ENCODE measurements at regions of chr16 and their contacts with region 1.

Region 1: DNA sequence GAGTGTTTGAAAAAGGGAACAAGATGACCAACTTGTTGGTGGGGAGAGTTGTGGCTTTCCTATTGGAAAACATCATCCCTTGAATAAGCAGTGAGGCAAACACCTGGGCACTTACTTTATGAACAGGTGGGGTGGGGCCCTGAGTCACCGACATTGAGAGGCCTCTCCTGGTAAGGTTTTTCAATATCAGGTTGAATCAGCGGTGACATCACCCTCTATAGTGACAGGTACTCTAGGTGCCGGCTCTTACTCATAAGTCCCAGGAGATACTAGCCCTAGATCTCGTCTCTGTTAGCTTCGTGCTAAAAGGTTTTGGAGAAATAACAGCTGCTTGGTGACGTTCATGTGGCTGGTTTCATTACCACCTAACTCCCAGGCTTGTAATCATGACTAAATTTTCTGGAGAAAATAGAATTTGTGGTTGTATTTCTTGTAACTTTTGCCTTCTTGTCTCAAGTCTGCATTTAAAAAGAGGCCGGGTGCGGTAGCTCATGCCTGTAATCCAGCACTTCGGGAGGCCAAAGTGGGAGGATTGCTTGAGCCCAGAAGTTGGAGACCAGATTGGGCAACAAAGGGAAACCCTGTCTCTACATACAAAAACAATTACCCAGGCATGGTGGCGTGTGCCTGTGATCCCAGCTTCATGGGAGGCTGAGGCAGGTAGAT is 19.3 kb downstream of the CDH1 start:
- DNase-seq: peak; percentile 90
- ATAC-seq: peak; percentile 69
- H3K4me3 Mint-ChIP-seq: peak overlapping the region; percentile 52
- H3K27ac Mint-ChIP-seq: peak overlapping the region; percentile 97
- H3K4me1 Mint-ChIP-seq: peaks cover 66% of the 10 kb centered on the region
- H3K27me3 Mint-ChIP-seq: no peaks in the 10 kb centered on the region

Region 2: GRCh38 chr16:67311607-67312488 is 1444.5 kb before region 1 on chr16:
- CTCF ChIA-PET with region 1: no interaction called
- POLR2A ChIA-PET with region 1: no interaction called
- intact Hi-C with region 1: loop called in 1 of 2 experiments (anchors 5 kb)
- DNase-seq: peak; percentile 94
- ATAC-seq: peak; percentile 98
- H3K4me3 Mint-ChIP-seq: peak overlapping the region; percentile 1
- H3K27ac Mint-ChIP-seq: peak overlapping the region; percentile 98
- H3K4me1 Mint-ChIP-seq: peaks cover 40% of the 10 kb centered on the region
- H3K27me3 Mint-ChIP-seq: peaks cover 1% of the 10 kb centered on the region

Region 3: DNA sequence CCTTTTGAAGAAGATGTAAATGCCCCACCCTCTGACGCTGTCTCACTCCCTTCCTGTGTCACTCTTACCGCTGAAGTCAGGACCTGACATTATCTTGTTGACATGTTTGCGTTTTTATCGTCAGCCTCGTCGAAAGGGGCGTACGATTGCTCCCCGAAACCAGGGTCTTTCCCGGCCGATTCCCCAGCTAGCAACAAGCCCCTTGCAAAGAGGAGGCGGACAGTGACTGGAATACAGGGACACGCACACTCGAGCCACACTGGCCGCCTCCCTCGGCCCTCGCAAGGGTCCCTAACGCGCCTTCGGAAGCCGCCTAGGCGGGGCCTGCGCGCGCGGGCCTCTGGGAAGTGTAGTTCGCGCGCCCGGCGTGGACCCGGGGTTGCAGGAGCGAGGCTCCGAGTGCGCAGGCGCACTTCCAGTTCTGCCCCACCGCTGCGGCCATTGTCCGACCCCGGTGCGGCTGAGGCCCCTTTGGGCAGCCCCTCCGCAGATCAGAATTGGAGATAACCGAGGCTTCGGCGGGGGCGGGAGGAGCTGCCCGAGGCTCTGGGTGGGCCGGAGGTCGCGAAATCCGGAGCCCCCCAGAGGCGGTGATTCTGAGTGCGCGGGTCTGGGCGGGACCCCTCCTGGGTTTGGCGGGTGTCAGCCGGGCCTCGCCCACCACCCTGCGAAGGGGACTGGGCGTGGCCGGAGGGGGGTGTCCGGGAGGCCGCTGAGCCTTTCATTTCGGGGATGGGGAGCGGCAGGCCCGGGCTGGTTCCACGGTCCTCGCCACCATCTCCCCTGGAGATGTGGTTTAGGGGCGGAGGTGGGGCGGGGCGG is 217.3 kb before region 1 on chr16 and contains the start of gene ZFP90:
- CTCF ChIA-PET with region 1: no interaction called
- POLR2A ChIA-PET with region 1: interaction called, 4 read pairs
- intact Hi-C with region 1: loop called in 1 of 2 experiments (anchors 2 kb)
- DNase-seq: peak; percentile 93
- ATAC-seq: peak; percentile 96
- H3K4me3 Mint-ChIP-seq: peak within 1 kb of the TSS; percentile 89
- H3K27ac Mint-ChIP-seq: peak within 1 kb of the TSS; percentile 98
- H3K4me1 Mint-ChIP-seq: peaks cover 16% of the 10 kb centered on the region
- H3K27me3 Mint-ChIP-seq: no peaks in the 10 kb centered on the region
- total RNA-seq, gene ZFP90: 31.4 to 31.6 TPM

Region 4: DNA sequence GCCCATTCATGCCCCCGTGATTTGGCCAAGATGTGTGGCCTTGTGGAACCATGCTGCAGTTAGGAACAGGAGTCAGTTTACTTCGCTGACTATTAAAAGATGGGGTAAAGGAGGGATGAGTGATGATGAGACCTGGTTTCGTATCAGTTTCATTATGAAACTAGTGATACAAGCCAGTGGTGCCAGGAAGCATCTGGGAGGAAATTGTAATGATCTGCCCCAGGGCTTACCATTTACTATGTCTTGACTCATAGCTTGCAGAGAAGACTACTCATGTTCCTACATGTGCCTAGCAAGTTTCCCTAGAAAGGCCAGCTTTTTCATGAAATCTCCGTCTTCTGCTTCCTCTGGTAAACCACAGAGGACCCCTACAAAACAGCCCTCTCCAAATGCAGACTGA is 88.1 kb before region 1 on chr16:
- CTCF ChIA-PET with region 1: interaction called, 12 read pairs
- POLR2A ChIA-PET with region 1: interaction called, 15 read pairs
- intact Hi-C with region 1: loop called (anchors 1 kb)
- DNase-seq: peak; percentile 69
- ATAC-seq: peak; percentile 98
- H3K4me3 Mint-ChIP-seq: no peak overlapping the region
- H3K27ac Mint-ChIP-seq: peak overlapping the region; percentile 76
- H3K4me1 Mint-ChIP-seq: peaks cover 22% of the 10 kb centered on the region
- H3K27me3 Mint-ChIP-seq: peaks cover 5% of the 10 kb centered on the region

Region 5: GRCh38 chr16:68782198-68782597 is 25.8 kb after region 1 on chr16:
- CTCF ChIA-PET with region 1: interaction called, 3 read pairs
- POLR2A ChIA-PET with region 1: interaction called, 3 read pairs
- intact Hi-C with region 1: loop called in 1 of 2 experiments (anchors 2 kb)
- DNase-seq: peak; percentile 24
- ATAC-seq: peak; percentile 55
- H3K4me3 Mint-ChIP-seq: no peak overlapping the region
- H3K27ac Mint-ChIP-seq: no peak overlapping the region
- H3K4me1 Mint-ChIP-seq: peaks cover 7% of the 10 kb centered on the region
- H3K27me3 Mint-ChIP-seq: peaks cover 4% of the 10 kb centered on the region

Region 6: DNA sequence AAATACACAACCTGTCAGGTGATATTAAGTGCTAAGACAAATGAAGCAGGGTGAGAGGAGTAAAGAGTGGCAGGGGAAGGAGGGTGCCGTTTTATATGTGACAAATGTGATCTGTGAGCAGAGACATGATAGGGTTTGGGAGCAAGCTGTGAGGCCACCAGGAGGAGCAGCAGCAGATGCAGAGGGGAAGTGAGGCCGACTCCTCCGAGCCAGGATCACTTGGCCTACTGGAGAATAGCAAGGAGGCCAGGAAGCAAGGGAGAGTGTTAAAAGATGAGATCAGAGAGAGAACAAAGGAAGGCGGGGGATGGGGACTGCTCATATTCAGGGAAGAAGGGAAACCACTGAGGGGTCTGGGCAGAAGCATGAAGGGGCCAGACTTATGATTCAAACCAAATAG is 216.3 kb after region 1 on chr16:
- CTCF ChIA-PET with region 1: no interaction called
- POLR2A ChIA-PET with region 1: no interaction called
- intact Hi-C with region 1: no loop called
- DNase-seq: no peak
- ATAC-seq: no peak
- H3K4me3 Mint-ChIP-seq: no peak overlapping the region
- H3K27ac Mint-ChIP-seq: no peak overlapping the region
- H3K4me1 Mint-ChIP-seq: no peaks in the 10 kb centered on the region
- H3K27me3 Mint-ChIP-seq: no peaks in the 10 kb centered on the region

Region 7: GRCh38 chr16:69166221-69166833 is 409.9 kb after region 1 on chr16:
- CTCF ChIA-PET with region 1: no interaction called
- POLR2A ChIA-PET with region 1: interaction called, 6 read pairs
- intact Hi-C with region 1: loop called in 1 of 2 experiments (anchors 1 kb)
- DNase-seq: peak; percentile 91
- ATAC-seq: peak; percentile 92
- H3K4me3 Mint-ChIP-seq: peak overlapping the region; percentile 32
- H3K27ac Mint-ChIP-seq: peak overlapping the region; percentile 87
- H3K4me1 Mint-ChIP-seq: peaks cover 52% of the 10 kb centered on the region
- H3K27me3 Mint-ChIP-seq: no peaks in the 10 kb centered on the region

Region 8: GRCh38 chr16:69443927-69444631 is 687.7 kb after region 1 on chr16:
- CTCF ChIA-PET with region 1: no interaction called
- POLR2A ChIA-PET with region 1: no interaction called
- intact Hi-C with region 1: no loop called
- DNase-seq: peak; percentile 47
- ATAC-seq: peak; percentile 71
- H3K4me3 Mint-ChIP-seq: peak overlapping the region; percentile 65
- H3K27ac Mint-ChIP-seq: peak overlapping the region; percentile 94
- H3K4me1 Mint-ChIP-seq: peaks cover 36% of the 10 kb centered on the region
- H3K27me3 Mint-ChIP-seq: no peaks in the 10 kb centered on the region

Measured in activated CD4-positive, alpha-beta T cell treated with anti-CD3 and anti-CD28 coated beads for 36 hours (primary cell).